SK-N-SH (cell line): ENCODE measurements at regions of chr5 and their contacts with region 1.

Region 1: DNA sequence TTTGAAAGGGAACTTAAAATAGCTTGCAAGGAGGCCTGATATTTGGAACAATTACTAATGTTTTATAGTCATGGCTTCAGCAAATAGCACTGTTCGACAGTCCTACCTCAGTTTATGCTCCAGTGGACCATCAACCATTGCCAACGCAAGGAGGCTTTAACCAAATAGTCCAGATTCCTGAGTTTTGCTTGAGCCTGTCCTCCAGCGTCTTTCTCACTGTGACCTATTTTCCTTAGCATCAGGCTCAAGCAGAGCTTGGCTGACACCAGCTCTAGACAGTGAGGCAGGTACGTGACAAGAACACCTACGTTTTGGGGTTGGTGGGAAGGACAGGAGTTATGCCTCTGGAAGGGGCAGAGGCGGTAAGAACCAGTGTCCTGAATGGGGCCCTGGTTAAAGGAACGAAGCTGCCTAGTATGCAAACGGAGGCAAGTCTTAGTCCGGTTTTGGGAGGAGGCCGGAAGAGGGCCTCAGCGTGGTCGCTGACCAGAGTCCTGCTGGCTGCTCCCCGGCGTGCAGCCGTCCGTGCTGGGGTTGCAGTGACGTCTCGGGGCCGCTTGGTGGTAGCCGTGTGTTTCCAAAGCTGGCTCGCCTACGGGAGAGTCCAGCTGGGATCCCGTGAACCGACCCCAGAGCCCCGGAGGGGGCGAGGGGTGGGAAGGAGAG is 998 bp upstream of the FGF18 start:
- DNase-seq: peak; percentile 94
- H3K4me3 ChIP-seq: peak overlapping the region; percentile 47 to 58
- H3K27ac ChIP-seq: no peak overlapping the region
- H3K4me1 ChIP-seq: peaks cover 0 to 32% of the 10 kb centered on the region in 2 experiments; a peak in 1 of 4 replicates
- H3K27me3 ChIP-seq: no peaks in the 10 kb centered on the region
- CTCF ChIP-seq: peak; percentile 86
- EP300 ChIP-seq: no peak
- RAD21 ChIP-seq: peak; percentile 94

Region 2: DNA sequence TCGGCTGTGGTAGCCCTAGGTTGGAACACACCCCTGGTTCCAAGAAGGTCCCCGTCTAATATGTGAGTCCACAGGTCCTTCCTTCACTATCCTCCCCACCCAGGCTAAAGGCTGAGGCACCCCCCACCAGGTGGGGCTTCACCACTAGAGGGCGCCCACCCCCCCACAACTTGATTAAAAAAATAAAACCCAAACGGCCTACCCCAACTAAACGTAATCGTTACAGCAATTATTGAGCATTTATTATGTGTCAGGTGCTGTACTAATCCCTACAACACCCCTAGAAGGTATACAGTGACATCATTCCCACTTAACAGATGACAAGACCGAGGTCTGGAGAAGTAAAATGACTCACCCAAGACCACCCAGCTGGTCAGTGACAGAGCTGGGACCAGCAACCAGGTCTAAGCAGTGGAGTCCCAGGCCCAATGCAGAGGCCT is 66.0 kb after region 1 on chr5:
- CTCF ChIA-PET with region 1: interaction called, 14 read pairs
- POLR2A ChIA-PET with region 1: no interaction called
- DNase-seq: peak; percentile 82
- H3K4me3 ChIP-seq: no peak overlapping the region
- H3K27ac ChIP-seq: no peak overlapping the region
- H3K4me1 ChIP-seq: no peaks in the 10 kb centered on the region
- H3K27me3 ChIP-seq: no peaks in the 10 kb centered on the region
- CTCF ChIP-seq: peak; percentile 87
- EP300 ChIP-seq: no peak
- RAD21 ChIP-seq: peak; percentile 60

Region 3: GRCh38 chr5:171630027-171630669 is 211.7 kb after region 1 on chr5:
- CTCF ChIA-PET with region 1: interaction called, 33 read pairs
- POLR2A ChIA-PET with region 1: no interaction called
- DNase-seq: peak; percentile 91
- H3K4me3 ChIP-seq: peak overlapping the region in 1 of 2 experiments; percentile 21; a peak in 2 of 4 replicates
- H3K27ac ChIP-seq: no peak overlapping the region
- H3K4me1 ChIP-seq: peaks cover 0 to 11% of the 10 kb centered on the region in 2 experiments; a peak in 1 of 4 replicates
- H3K27me3 ChIP-seq: 0 out of 2 replicates have a peak, but pooled peaks cover 9% of the 10 kb centered on the region
- CTCF ChIP-seq: peak; percentile 47
- EP300 ChIP-seq: no peak
- RAD21 ChIP-seq: peak; percentile 78

Region 4: GRCh38 chr5:171858303-171858702 is 439.9 kb after region 1 on chr5:
- CTCF ChIA-PET with region 1: interaction called, 14 read pairs
- POLR2A ChIA-PET with region 1: interaction called, 3 read pairs
- DNase-seq: peak; percentile 40
- H3K4me3 ChIP-seq: no peak overlapping the region
- H3K27ac ChIP-seq: no peak overlapping the region
- H3K4me1 ChIP-seq: no peaks in the 10 kb centered on the region; a peak in 1 of 4 replicates
- H3K27me3 ChIP-seq: no peaks in the 10 kb centered on the region
- CTCF ChIP-seq: peak; percentile 54
- EP300 ChIP-seq: no peak
- RAD21 ChIP-seq: peak; percentile 29; the same call in 1 of the 2 replicates

Region 5: GRCh38 chr5:171907725-171908343 is 489.4 kb after region 1 on chr5:
- CTCF ChIA-PET with region 1: interaction called, 122 read pairs
- POLR2A ChIA-PET with region 1: no interaction called
- DNase-seq: peak; percentile 52
- H3K4me3 ChIP-seq: peak overlapping the region in 1 of 2 experiments; percentile 12; a peak in 1 of 4 replicates
- H3K27ac ChIP-seq: no peak overlapping the region
- H3K4me1 ChIP-seq: peaks cover 0 to 7% of the 10 kb centered on the region in 2 experiments; a peak in 2 of 4 replicates
- H3K27me3 ChIP-seq: no peaks in the 10 kb centered on the region
- CTCF ChIP-seq: peak; percentile 85
- EP300 ChIP-seq: peak in 1 of 2 experiments; percentile 25; a peak in 1 of 4 replicates
- RAD21 ChIP-seq: peak; percentile 88